IMR-90 (cell line): ENCODE measurements at regions of chr15 and their contacts with region 1.

Region 1: GRCh38 chr15:40382580-40383456 is at the start of gene KNSTRN:
- DNase-seq: peak; percentile 93
- ATAC-seq: peak; percentile 91
- H3K4me3 ChIP-seq: peak within 1 kb of the TSS; percentile 76
- H3K27ac ChIP-seq: peak within 1 kb of the TSS; percentile 76
- H3K4me1 ChIP-seq: peaks cover 4% of the 10 kb centered on the region
- H3K27me3 ChIP-seq: no peaks in the 10 kb centered on the region
- CTCF ChIP-seq: no peak
- POLR2A ChIP-seq: peak; percentile 62; the same call in 1 of the 2 replicates
- RAD21 ChIP-seq: no peak
- total RNA-seq, gene KNSTRN: 73.5 and 73.6 TPM in 2 replicates

Region 2: DNA sequence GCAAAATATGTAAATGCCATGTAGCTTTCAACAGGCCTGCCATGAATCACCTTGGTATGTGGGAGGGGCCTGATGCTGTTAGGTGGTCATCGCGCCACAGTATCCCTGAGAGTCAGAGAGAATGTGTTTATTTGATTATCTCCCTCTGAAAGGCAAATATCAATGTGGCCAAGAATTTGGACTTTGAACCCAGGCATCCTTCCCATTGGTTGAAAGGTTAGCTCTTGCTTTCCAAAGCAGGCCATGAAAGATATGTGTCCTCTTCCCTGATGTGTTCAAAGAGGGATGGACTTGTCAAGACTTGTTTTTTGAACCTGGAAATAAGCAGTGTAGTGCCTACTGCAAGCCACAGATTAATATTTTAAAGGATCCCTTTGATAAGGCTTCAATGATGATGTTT is 380.5 kb before region 1 on chr15:
- CTCF ChIA-PET with region 1: no interaction called
- POLR2A ChIA-PET with region 1: no interaction called
- dilution Hi-C with region 1: no loop called
- in situ Hi-C with region 1: no loop called
- intact Hi-C with region 1: no loop called
- DNase-seq: peak; percentile 65
- ATAC-seq: peak; percentile 51
- H3K4me3 ChIP-seq: no peak overlapping the region
- H3K27ac ChIP-seq: peak overlapping the region; percentile 40; the same call in 1 of the 2 replicates
- H3K4me1 ChIP-seq: peaks cover 11% of the 10 kb centered on the region
- H3K27me3 ChIP-seq: no peaks in the 10 kb centered on the region
- CTCF ChIP-seq: no peak
- POLR2A ChIP-seq: no peak
- RAD21 ChIP-seq: no peak

Region 3: DNA sequence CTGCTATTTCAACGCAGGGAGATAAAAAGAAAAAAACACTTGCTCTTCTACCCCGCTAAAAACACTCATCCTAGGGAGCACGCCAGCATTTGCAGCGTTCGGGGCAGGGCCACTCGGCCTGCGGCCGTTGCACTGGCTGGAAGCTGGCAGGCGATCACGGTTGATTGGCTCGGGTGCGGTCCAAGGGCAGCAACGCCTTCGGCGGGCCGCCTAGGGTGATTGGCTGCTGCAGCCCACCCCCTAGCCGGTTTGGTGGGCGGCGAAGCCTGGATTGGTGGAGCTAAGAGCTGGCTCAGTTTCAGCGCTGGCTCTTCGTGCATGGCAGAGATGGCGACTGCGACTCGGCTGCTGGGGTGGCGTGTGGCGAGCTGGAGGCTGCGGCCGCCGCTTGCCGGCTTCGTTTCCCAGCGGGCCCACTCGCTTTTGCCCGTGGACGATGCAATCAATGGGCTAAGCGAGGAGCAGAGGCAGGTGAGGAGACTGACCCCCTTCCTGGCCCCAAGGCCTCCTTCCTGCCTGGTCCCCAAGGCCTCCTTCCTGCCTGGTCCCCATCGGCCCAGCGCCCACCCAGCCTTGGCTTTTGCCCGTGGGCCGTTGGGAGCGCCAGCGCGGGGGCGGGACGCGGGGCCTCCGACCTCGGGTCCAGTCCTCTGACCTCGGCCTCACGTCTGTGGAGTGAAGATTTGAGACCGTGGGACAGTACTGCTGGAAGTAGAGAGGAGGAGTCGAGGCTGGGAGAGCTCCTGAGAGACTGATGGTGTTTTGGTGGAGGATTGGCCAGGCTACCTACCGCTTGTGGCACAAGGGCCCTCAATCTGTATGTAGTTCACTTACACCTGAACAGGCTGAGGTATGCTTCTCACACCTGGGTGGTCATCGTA is 22.9 kb after region 1 on chr15 and contains the start of gene IVD:
- CTCF ChIA-PET with region 1: interaction called, 3 read pairs
- POLR2A ChIA-PET with region 1: interaction called, 3 read pairs
- dilution Hi-C with region 1: no loop called
- in situ Hi-C with region 1: no loop called
- intact Hi-C with region 1: loop called (anchors 2 kb)
- DNase-seq: peak; percentile 96
- ATAC-seq: peak; percentile 100
- H3K4me3 ChIP-seq: peak within 1 kb of the TSS; percentile 71
- H3K27ac ChIP-seq: peak within 1 kb of the TSS; percentile 71
- H3K4me1 ChIP-seq: peaks cover 3% of the 10 kb centered on the region
- H3K27me3 ChIP-seq: no peaks in the 10 kb centered on the region
- CTCF ChIP-seq: no peak
- POLR2A ChIP-seq: peak; percentile 59; the same call in 1 of the 2 replicates
- RAD21 ChIP-seq: no peak
- total RNA-seq, gene IVD: 27.5 and 31.7 TPM in 2 replicates

Region 4: DNA sequence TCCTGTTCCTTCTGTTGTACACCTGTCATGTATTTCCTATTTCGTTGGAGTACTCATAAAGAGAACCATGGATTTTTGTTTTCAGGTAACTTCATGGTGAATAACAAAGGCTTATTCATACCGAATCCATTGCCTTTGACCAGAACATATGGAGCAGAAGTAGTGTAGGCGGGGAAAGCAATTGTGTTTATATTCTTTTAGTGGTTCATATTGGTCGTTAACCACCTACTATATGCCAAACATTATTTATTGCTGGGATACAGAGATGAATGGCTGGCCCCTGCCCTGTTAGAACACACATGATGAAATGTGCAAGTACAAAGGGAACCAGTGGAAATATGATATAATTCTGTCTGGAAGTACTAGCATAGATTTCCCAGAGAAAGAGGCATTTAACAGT is 196.1 kb after region 1 on chr15:
- CTCF ChIA-PET with region 1: no interaction called
- POLR2A ChIA-PET with region 1: no interaction called
- dilution Hi-C with region 1: no loop called
- in situ Hi-C with region 1: no loop called
- intact Hi-C with region 1: no loop called
- DNase-seq: no peak
- ATAC-seq: no peak
- H3K4me3 ChIP-seq: no peak overlapping the region
- H3K27ac ChIP-seq: no peak overlapping the region
- H3K4me1 ChIP-seq: no peaks in the 10 kb centered on the region
- H3K27me3 ChIP-seq: no peaks in the 10 kb centered on the region
- CTCF ChIP-seq: no peak
- POLR2A ChIP-seq: no peak
- RAD21 ChIP-seq: no peak